ENCODE measurements at regions of chr3 and their contacts with region 1.

Region 1: GRCh38 chr3:141303481-141304223 is 64.7 kb upstream of the ZBTB38 start:
- DNase-seq: peak; percentile 69 to 79
- ATAC-seq: peak; percentile 65 to 83; a peak in 5 of 6 replicates
- H3K4me3 ChIP-seq: no peak overlapping the region
- H3K27ac ChIP-seq: peak overlapping the region; percentile 21 to 71; a peak in 5 of 6 replicates
- H3K4me1 ChIP-seq: peaks cover 34% of the 10 kb centered on the region
- CTCF ChIP-seq: peak; percentile 87
- EP300 ChIP-seq: no peak
- POLR2A ChIP-seq: no peak
- RAD21 ChIP-seq: peak; percentile 83 to 87

Region 2: GRCh38 chr3:141262308-141262705 is 41.3 kb before region 1 on chr3:
- CTCF ChIA-PET with region 1: no interaction called
- POLR2A ChIA-PET with region 1: no interaction called
- DNase-seq: no peak
- ATAC-seq: no peak
- H3K4me3 ChIP-seq: no peak overlapping the region
- H3K27ac ChIP-seq: no peak overlapping the region
- H3K4me1 ChIP-seq: no peaks in the 10 kb centered on the region
- CTCF ChIP-seq: no peak
- EP300 ChIP-seq: no peak
- POLR2A ChIP-seq: no peak
- RAD21 ChIP-seq: no peak

Region 3: DNA sequence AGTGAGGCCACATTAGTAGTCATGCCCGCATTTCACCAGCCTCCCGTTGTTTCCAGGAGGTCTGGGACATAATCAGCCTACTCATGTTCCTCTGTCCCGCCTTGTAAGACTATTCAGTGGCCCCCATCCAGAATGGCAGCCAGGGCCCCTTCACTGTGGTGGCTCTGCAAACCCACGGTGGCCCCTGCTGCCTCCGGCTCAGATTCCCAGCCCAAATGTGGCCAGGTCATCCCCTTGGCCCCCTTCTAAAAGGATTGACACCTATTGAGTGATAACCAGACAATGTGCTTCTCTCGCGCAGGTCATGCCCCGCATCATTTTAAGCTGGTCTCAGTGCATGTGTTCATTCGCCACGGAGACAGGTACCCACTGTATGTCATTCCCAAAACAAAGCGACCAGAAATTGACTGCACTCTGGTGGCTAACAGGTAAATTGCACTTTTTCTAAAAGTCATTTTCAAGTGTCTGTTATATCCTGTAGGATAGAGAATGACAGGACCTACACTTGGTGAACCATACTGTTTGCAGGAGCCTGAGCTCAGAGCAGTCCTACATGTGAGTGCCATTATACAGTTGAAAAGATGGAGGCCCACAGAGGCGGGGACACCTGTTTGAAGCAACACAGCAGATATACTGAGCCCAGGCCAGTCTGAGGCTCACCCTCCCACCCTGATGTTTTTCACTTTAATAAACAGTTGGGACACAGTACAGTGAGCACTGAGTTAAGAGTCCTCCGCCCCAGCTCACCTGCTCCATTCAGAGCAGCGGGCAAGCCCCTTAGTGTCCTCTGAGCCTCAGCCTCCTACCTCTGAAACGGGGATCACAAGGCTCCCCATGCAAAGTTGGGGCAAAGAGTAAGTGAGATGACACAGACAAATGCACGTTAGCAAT is 24.3 kb before region 1 on chr3:
- CTCF ChIA-PET with region 1: interaction called, 10 read pairs
- POLR2A ChIA-PET with region 1: no interaction called
- DNase-seq: peak; percentile 41 to 50
- ATAC-seq: peak; percentile 78 to 89
- H3K4me3 ChIP-seq: no peak overlapping the region
- H3K27ac ChIP-seq: no peak overlapping the region
- H3K4me1 ChIP-seq: peaks cover 17% of the 10 kb centered on the region
- CTCF ChIP-seq: peak; percentile 57
- EP300 ChIP-seq: no peak
- POLR2A ChIP-seq: no peak
- RAD21 ChIP-seq: peak; percentile 47 to 66

Region 4: GRCh38 chr3:141392897-141393734 is 89.5 kb after region 1 on chr3:
- CTCF ChIA-PET with region 1: no interaction called
- POLR2A ChIA-PET with region 1: no interaction called
- DNase-seq: peak in 1 of 2 experiments; percentile 45
- ATAC-seq: peak; percentile 26 to 62; a peak in 3 of 6 replicates
- H3K4me3 ChIP-seq: no peak overlapping the region
- H3K27ac ChIP-seq: peak overlapping the region; percentile 55 to 74
- H3K4me1 ChIP-seq: peaks cover 44% of the 10 kb centered on the region
- CTCF ChIP-seq: no peak
- EP300 ChIP-seq: 0 out of 5 replicates have a peak, but pooled peaks of 1 of the 2 experiments have one; percentile 12
- POLR2A ChIP-seq: no peak
- RAD21 ChIP-seq: no peak

Region 5: GRCh38 chr3:141426404-141427034 is 122.9 kb after region 1 on chr3:
- CTCF ChIA-PET with region 1: interaction called, 15 read pairs
- POLR2A ChIA-PET with region 1: no interaction called
- DNase-seq: peak in 1 of 2 experiments; percentile 75
- ATAC-seq: peak in 1 of 2 experiments; percentile 42; a peak in 4 of 6 replicates
- H3K4me3 ChIP-seq: no peak overlapping the region
- H3K27ac ChIP-seq: peak overlapping the region; percentile 99 to 100
- H3K4me1 ChIP-seq: peaks cover 75% of the 10 kb centered on the region
- CTCF ChIP-seq: no peak
- EP300 ChIP-seq: no peak
- POLR2A ChIP-seq: no peak
- RAD21 ChIP-seq: no peak; a peak in 1 of 5 replicates

Region 6: DNA sequence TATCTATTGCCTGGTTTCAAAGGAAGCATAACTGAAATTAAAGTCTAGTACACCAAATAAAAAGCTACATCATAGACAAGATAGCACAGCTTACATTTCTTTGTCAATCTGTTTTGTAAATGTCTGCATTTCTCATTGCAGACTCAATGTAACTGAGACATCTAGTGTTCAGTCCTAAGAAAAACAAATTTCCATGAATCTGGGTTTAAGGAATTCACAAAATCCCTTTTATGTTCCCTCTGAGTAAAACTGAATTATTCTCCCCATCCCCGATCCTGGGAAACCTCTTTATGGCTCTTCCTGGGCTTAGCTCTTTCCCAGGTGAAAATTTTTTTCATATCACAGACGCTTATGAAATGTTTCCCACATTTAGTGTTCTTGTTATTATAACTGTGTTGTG is 161.6 kb after region 1 on chr3:
- CTCF ChIA-PET with region 1: interaction called, 354 read pairs
- POLR2A ChIA-PET with region 1: interaction called, 3 read pairs
- DNase-seq: no peak
- ATAC-seq: peak in 1 of 2 experiments; percentile 40; a peak in 2 of 6 replicates
- H3K4me3 ChIP-seq: no peak overlapping the region
- H3K27ac ChIP-seq: no peak overlapping the region
- H3K4me1 ChIP-seq: no peaks in the 10 kb centered on the region
- CTCF ChIP-seq: peak; percentile 46; the same call in 2 of the 3 replicates
- EP300 ChIP-seq: no peak
- POLR2A ChIP-seq: no peak
- RAD21 ChIP-seq: peak; percentile 38 to 40

Region 7: GRCh38 chr3:141498598-141499223 is 195.1 kb after region 1 on chr3:
- CTCF ChIA-PET with region 1: no interaction called
- POLR2A ChIA-PET with region 1: no interaction called
- DNase-seq: no peak
- ATAC-seq: peak in 1 of 2 experiments; percentile 30; a peak in 1 of 6 replicates
- H3K4me3 ChIP-seq: no peak overlapping the region
- H3K27ac ChIP-seq: no peak overlapping the region
- H3K4me1 ChIP-seq: 0 out of 3 replicates have a peak, but pooled peaks cover 4% of the 10 kb centered on the region
- CTCF ChIP-seq: no peak
- EP300 ChIP-seq: no peak
- POLR2A ChIP-seq: no peak
- RAD21 ChIP-seq: no peak

Measured in A549 (cell line).